OCI-LY7 (cell line): ENCODE measurements at regions of chr3 and their contacts with region 1.

Region 1: DNA sequence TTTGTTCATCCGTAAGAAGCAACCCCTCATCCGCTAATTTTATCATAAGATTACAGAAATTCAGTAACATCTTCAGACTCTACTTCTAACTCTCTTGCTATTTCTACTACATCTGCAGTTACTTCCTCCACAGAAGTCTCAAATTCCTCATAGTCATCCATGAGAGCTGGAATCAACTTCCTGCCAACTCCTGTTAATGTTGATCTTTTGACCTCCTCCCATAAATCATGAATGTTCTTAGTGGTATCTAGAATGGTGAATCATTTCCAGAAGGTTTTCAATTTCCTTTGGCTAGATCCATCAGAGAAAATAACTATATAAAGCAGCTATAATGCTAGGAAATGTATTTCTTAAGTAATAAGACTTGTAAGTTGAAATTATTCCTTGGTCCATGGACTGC is 115.1 kb downstream of the TAFA4 start:
- DNase-seq: no peak
- H3K4me3 ChIP-seq: no peak overlapping the region
- H3K27ac ChIP-seq: no peak overlapping the region
- H3K4me1 ChIP-seq: no peaks in the 10 kb centered on the region
- CTCF ChIP-seq: no peak

Region 2: GRCh38 chr3:68764554-68764953 is 52.7 kb before region 1 on chr3:
- CTCF ChIA-PET with region 1: no interaction called
- POLR2A ChIA-PET with region 1: no interaction called
- intact Hi-C with region 1: loop called (anchors 10 kb)
- DNase-seq: no peak
- H3K4me3 ChIP-seq: no peak overlapping the region
- H3K27ac ChIP-seq: no peak overlapping the region
- H3K4me1 ChIP-seq: no peaks in the 10 kb centered on the region
- CTCF ChIP-seq: no peak